ENCODE measurements at regions of chr2 and their contacts with region 1.

Region 1: GRCh38 chr2:20446917-20447436 is at the start of gene RHOB:
- DNase-seq: peak; percentile 96
- H3K4me3 ChIP-seq: peak within 1 kb of the TSS; percentile 91
- H3K27ac ChIP-seq: peak within 1 kb of the TSS; percentile 47
- H3K27me3 ChIP-seq: no peaks in the 10 kb centered on the region
- CTCF ChIP-seq: no peak
- polyA plus RNA-seq, gene RHOB: 45.5 and 47.7 TPM in 2 replicates

Region 2: GRCh38 chr2:18910843-18911242 is 1536.1 kb before region 1 on chr2:
- CTCF ChIA-PET with region 1: no interaction called
- POLR2A ChIA-PET with region 1: no interaction called
- DNase-seq: no peak
- H3K4me3 ChIP-seq: no peak overlapping the region
- H3K27ac ChIP-seq: no peak overlapping the region
- H3K27me3 ChIP-seq: no peaks in the 10 kb centered on the region
- CTCF ChIP-seq: no peak

Region 3: DNA sequence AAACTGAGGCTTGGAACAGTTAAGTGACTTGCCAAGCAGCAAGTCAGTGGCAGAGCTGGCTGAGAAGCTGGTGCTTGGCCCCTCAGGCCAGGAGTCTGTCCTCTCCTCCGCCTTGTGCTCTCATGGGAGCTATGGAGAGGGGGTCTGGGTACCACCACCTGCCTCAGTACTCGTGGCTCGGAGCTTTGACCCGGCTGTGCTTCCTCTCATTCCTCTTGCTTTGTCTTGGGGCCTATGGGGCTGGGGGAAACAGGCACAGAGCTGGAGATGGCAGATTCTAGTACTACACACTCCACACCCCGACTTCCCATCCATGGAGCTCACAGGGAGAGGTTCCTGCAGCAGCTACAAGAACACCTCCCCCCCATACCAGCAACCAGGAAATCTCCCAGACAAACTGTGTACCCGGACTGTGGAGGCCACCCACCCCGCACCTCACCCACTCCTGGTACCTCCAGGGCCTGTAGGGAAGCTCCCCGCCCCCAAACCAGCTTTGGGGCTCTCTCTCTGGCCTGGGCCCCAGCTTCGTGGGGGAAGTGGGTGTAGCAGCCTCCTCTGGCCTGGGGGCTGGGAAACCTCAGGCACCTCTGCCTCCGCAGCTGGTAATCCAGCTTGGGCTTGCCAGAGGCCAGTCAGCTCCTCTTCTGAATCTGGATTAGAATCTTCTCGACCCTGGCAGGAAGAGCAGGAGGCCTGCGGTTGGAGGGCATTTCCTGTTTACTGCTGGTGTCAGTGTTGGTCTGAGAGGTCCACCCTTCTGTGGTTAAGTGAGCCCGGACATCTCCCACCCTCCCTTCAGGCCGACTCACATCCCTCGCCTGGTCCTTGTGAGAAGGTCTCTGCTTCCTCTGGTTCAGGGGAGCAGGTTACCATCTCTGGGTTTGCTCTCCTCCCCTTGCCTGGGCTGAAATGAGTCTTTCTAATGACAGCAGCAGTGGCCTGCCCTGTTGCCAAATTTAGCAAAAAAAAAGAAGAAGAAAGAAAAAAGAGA is 22.4 kb before region 1 on chr2:
- CTCF ChIA-PET with region 1: interaction called, 15 read pairs
- POLR2A ChIA-PET with region 1: interaction called, 72 read pairs
- DNase-seq: peak; percentile 81
- H3K4me3 ChIP-seq: no peak overlapping the region
- H3K27ac ChIP-seq: no peak overlapping the region
- H3K27me3 ChIP-seq: no peaks in the 10 kb centered on the region
- CTCF ChIP-seq: no peak

Region 4: DNA sequence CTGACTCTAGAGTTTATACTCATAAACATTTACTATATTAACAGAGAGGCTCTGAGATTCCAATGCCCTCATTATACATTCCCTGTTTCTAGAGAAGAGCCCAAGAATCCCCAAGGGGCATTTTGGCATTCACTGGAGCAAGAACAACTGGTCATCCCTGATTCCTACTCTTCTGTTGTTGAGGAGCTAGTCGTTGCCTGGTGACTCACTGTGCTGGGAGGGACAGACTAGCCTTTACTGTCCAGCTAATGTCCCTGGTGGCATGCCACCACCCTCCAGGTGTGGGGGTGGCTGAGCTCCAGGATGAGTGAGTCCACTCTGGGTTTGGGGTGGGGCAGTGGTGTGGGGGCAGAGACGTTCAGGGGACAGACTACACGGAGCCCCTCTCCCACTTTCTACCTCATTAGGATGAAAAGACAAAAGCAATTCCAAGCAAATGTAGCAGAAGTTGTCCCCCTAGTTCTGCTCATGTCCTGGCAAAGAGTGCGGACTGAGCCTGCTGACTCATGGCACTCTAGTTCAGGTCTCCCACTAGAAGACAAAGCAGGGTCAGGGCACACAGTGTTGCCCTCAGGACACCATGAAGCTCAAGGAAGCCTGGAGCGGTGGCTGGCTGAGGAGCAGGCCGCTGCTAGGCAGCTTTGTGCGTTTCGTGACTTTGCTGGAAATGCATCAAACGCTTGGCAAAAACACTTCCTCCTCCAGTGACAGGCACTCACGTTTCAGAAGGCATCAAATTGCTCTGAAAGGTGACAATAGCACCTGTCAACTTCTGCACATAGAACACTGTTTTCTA is 49.3 kb after region 1 on chr2:
- CTCF ChIA-PET with region 1: interaction called, 3 read pairs
- POLR2A ChIA-PET with region 1: interaction called, 33 read pairs
- DNase-seq: no peak
- H3K4me3 ChIP-seq: no peak overlapping the region
- H3K27ac ChIP-seq: no peak overlapping the region
- H3K27me3 ChIP-seq: peaks cover 3% of the 10 kb centered on the region
- CTCF ChIP-seq: no peak

Region 5: DNA sequence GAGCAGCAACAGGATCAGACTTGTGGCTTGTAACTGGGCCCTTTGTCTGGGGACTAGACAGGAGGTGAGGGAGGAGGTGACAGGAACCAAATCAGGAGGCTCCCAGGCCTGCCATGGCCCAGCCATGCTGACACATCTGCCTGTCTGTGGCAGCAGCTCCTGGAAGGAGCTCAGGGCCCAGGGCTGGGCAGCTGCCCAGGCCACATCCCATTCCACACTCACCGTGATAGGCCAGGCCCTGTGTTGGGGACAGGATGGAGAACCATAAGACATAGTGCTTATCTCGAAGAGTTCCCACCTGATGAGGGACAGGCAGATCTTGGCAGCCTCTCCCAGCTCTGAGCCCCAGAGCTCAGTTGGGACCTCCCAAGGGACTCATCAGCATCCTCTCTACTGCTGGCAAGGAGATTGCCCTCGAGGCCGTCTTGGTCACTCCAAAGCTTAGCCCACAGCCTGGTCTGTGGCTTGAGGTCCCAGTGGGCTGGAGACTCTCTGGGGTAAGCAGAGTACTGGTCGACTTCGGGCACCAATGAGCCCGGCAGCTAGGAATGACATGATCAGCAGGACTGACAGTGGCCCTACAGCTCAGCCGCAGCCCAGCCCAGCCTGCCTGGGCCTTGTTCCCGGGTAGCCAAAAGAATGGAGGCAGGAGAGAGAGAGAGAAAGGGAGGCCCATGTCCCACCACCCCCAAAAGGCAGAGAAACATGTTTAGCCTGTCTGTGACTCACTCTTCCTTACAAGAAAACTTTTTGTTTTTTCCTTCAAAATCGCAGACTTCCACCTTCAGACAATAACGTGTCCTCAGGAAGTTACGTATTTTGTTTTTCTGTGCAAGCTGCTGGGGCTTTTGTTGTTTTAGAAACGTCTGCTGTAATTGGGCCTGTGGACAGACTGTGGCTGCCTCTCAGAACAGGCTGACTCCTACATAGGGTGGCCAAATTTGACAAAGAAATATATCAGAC is 121.8 kb after region 1 on chr2:
- CTCF ChIA-PET with region 1: interaction called, 4 read pairs
- POLR2A ChIA-PET with region 1: interaction called, 13 read pairs
- DNase-seq: no peak
- H3K4me3 ChIP-seq: no peak overlapping the region
- H3K27ac ChIP-seq: no peak overlapping the region
- H3K27me3 ChIP-seq: peaks cover 6% of the 10 kb centered on the region
- CTCF ChIP-seq: no peak

Region 6: GRCh38 chr2:20604951-20605381 is 158.0 kb after region 1 on chr2:
- CTCF ChIA-PET with region 1: interaction called, 6 read pairs
- POLR2A ChIA-PET with region 1: interaction called, 11 read pairs
- DNase-seq: peak; percentile 60
- H3K4me3 ChIP-seq: no peak overlapping the region
- H3K27ac ChIP-seq: peak overlapping the region; percentile 33
- H3K27me3 ChIP-seq: no peaks in the 10 kb centered on the region
- CTCF ChIP-seq: no peak

Region 7: DNA sequence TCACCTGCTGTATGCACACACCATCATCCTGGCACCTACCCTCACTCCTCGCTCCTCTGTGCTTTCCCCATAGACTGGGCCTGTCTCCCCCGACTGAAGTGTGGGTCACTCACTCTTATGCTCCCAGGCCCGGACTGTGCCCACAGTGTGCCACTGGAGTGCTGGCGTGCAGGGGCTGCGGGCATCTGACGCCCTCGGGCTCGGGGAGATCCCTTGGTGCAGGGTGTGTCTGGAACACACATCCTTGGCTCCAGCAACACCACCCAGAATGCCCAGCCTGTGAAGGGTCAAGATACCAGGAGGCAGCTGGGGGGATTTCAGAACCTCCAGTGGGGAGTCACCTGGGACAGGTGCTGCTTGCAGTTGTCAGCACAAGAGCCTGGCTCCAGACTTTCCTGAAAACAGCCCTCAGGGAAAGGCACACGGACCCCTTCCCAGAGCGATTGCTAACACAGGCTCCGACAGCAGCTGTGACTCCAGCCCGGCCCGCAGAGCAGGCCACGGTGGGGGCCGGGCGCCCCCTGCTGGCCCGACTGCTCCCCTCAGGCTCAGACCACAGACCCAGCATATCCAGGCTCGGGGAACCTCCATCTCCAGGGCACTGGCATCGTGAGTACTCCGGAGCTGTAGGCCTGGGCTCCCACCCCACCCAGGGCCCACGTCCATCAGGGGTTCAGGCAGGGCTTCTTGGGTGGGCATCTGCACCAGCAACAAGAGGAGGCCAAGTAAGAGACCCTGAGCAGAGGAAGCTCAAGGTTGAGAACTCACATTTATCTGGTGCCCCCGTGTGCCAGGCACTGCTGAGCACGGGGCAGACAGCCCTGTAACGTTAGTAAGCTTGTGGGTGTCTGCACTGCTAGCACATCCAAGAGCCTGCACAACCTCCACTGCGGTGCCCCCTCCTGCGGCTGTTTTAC is 195.3 kb after region 1 on chr2:
- CTCF ChIA-PET with region 1: interaction called, 79 read pairs
- POLR2A ChIA-PET with region 1: interaction called, 15 read pairs
- DNase-seq: no peak
- H3K4me3 ChIP-seq: no peak overlapping the region
- H3K27ac ChIP-seq: no peak overlapping the region
- H3K27me3 ChIP-seq: no peaks in the 10 kb centered on the region
- CTCF ChIP-seq: peak; percentile 94